HepG2 (cell line): ENCODE measurements at regions of chr21 and their contacts with region 1.

Region 1: DNA sequence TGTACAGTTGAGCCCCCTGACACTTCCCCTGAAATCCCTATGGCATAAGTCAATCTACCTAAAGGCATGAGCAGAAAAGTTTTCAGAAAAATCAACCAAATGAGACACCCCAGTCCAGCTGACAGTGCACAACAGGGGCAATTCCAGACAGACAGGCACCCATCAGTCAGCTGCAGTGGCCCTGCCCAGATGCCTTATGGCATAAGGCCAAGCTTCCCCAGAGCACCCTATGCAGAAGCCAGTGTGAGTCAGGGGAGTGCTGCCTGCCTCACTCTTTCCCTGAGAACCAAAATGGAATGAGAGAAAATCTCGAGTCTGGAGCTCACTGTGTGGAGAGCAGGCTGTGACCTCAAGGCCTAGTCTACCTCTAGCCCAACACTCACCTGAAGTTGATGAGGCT is 38.1 kb downstream of the MRAP start:
- DNase-seq: no peak
- ATAC-seq: no peak
- H3K4me3 ChIP-seq: no peak overlapping the region
- H3K27ac ChIP-seq: no peak overlapping the region
- H3K4me1 ChIP-seq: peaks cover 19% of the 10 kb centered on the region
- H3K27me3 ChIP-seq: no peaks in the 10 kb centered on the region
- CTCF ChIP-seq: no peak
- EP300 ChIP-seq: no peak
- POLR2A ChIP-seq: no peak
- RAD21 ChIP-seq: no peak

Region 2: DNA sequence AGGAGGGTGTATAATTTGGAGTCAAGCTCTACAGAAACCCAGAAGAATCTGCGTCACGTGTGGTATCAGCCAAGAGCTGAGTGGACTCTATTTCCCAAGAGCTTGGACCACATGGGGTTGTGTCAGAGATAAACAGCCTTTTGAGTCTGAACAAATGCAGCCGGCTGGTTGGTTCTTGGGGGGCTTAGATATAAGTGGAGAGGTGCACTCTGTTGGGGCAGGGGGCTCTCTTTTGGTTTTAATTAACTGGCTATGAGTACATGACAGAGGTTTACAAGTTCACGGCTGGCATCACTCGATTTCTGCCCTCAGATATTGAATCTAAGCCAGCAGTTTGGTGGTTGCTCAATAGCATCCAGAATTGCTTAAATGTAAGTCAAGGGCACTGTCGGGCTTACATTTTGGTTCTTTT is 38.6 kb before region 1 on chr21:
- CTCF ChIA-PET with region 1: no interaction called
- POLR2A ChIA-PET with region 1: no interaction called
- in situ Hi-C with region 1: no loop called
- intact Hi-C with region 1: loop called (anchors 5 kb)
- DNase-seq: no peak
- ATAC-seq: peak; percentile 25
- H3K4me3 ChIP-seq: peak overlapping the region in 1 of 3 experiments; percentile 55; a peak in 2 of 6 replicates
- H3K27ac ChIP-seq: no peak overlapping the region
- H3K4me1 ChIP-seq: peaks cover 44% of the 10 kb centered on the region
- H3K27me3 ChIP-seq: no peaks in the 10 kb centered on the region
- CTCF ChIP-seq: no peak
- EP300 ChIP-seq: no peak; a peak in 1 of 4 replicates
- POLR2A ChIP-seq: no peak
- RAD21 ChIP-seq: no peak